K562 (cell line): ENCODE measurements at regions of chr2 and their contacts with region 1.

Region 1: DNA sequence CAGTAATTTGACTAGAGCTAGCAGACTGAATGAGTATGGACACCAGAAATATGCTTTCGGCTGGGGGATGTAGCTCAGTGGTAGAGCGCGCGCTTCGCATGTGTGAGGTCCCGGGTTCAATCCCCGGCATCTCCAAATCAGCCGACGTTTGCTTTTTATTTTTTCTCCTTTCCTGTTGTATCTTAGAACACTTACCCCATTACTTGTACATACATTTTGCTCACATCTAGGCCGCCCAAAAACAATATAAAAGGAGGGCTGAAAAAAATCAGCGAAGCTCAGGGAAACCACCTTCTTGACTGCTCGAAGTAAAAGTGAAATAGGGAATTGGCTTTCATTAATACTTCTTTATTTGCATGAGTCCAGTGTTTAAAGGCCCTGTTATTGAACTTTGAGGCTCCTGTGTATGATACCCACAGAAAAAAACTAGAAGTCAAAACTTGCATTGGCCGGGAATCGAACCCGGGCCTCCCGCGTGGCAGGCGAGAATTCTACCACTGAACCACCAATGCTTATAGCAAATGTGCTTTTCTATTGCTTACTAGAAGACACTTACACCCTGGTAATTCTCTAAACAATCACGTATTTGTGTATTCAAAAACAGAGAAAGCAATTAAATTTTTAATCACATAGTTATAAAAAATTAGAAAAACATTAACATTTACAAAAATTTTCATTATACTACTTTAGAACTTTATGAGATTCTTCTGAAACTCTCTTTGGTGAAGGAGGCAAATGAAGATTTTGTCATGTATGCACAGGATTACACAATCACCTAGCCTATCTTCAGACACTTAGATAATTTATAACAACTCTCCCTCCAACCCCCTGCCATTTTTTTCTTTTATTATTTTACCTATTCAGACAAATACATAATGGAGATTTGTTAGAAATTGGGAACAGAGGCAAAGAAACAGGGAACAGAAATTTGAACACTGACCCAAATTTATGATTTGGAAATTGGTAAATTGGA is 35.2 kb upstream of the GPD2 start:
- DNase-seq: peak; percentile 73 to 84 (median 74)
- ATAC-seq: peak; percentile 84
- H3K4me3 ChIP-seq: peak overlapping the region; percentile 63
- H3K27ac ChIP-seq: peak overlapping the region; percentile 77
- H3K4me1 ChIP-seq: peaks cover 8 to 18% of the 10 kb centered on the region in 2 experiments; a peak in 4 of 5 replicates
- H3K27me3 ChIP-seq: no peaks in the 10 kb centered on the region
- CTCF ChIP-seq: peak in 1 of 3 experiments; percentile 15; a peak in 1 of 6 replicates
- EP300 ChIP-seq: peak; percentile 60; the same call in 1 of the 2 replicates
- POLR2A ChIP-seq: no peak
- RAD21 ChIP-seq: peak; percentile 32 to 42

Region 2: DNA sequence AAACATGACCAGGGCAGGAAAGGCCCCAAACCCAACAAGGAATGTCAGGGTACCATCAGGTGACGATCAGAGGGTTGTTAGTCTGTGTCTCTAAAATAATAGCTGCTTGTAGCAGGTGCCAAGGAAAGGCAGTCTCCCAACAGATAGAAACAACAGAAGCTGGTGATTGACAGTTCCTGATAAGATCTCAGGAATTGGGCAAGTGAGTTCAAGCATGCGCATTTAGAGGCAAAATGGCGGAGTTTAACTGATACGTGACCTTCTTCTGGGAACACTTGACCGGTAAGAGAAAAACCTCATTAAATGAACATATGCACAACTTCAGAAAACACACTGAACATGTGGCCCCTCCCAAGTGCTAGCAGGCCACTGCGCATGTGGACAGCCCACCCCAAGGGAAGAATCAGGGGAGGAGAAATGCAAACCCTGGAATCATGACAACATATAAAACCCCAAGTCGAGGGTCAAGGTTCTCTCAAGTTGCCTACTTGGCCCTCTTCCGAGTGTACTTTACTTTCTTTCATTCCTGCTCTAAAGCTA is 1037.6 kb before region 1 on chr2:
- CTCF ChIA-PET with region 1: no interaction called
- POLR2A ChIA-PET with region 1: no interaction called
- in situ Hi-C with region 1: no loop called
- intact Hi-C with region 1: loop called (anchors 5 kb)
- DNase-seq: peak; percentile 21 to 83 (median 40)
- ATAC-seq: peak; percentile 59
- H3K4me3 ChIP-seq: peak overlapping the region; percentile 30
- H3K27ac ChIP-seq: peak overlapping the region; percentile 85
- H3K4me1 ChIP-seq: peaks cover 0 to 3% of the 10 kb centered on the region in 2 experiments; a peak in 1 of 5 replicates
- H3K27me3 ChIP-seq: no peaks in the 10 kb centered on the region
- CTCF ChIP-seq: no peak
- EP300 ChIP-seq: no peak
- POLR2A ChIP-seq: 0 out of 2 replicates have a peak, but pooled peaks have one; percentile 23
- RAD21 ChIP-seq: no peak

Region 3: DNA sequence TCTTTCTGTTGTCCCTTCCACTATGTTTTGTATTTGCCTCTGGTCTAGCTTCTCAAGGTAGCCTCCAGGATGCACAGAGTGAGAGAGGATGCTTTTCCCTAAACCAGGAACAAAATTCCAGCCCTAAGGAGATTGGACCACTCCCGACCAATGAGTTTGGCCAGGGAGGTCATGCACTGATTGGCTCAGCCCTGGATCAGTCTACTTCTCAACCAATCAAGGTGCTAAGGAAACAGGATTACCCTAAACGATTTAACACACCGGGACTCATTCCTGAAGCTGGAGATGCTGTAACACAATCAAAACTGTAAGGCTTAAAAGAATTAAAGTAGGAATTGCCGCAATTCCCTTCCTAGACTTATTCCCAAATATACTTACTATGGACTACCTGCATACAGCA is 34.2 kb before region 1 on chr2:
- CTCF ChIA-PET with region 1: no interaction called
- POLR2A ChIA-PET with region 1: no interaction called
- in situ Hi-C with region 1: no loop called
- intact Hi-C with region 1: no loop called
- DNase-seq: peak in 1 of 4 experiments; percentile 27
- ATAC-seq: peak; percentile 67
- H3K4me3 ChIP-seq: no peak overlapping the region
- H3K27ac ChIP-seq: no peak overlapping the region
- H3K4me1 ChIP-seq: no peaks in the 10 kb centered on the region
- H3K27me3 ChIP-seq: no peaks in the 10 kb centered on the region
- CTCF ChIP-seq: no peak
- EP300 ChIP-seq: no peak
- POLR2A ChIP-seq: no peak
- RAD21 ChIP-seq: no peak

Region 4: DNA sequence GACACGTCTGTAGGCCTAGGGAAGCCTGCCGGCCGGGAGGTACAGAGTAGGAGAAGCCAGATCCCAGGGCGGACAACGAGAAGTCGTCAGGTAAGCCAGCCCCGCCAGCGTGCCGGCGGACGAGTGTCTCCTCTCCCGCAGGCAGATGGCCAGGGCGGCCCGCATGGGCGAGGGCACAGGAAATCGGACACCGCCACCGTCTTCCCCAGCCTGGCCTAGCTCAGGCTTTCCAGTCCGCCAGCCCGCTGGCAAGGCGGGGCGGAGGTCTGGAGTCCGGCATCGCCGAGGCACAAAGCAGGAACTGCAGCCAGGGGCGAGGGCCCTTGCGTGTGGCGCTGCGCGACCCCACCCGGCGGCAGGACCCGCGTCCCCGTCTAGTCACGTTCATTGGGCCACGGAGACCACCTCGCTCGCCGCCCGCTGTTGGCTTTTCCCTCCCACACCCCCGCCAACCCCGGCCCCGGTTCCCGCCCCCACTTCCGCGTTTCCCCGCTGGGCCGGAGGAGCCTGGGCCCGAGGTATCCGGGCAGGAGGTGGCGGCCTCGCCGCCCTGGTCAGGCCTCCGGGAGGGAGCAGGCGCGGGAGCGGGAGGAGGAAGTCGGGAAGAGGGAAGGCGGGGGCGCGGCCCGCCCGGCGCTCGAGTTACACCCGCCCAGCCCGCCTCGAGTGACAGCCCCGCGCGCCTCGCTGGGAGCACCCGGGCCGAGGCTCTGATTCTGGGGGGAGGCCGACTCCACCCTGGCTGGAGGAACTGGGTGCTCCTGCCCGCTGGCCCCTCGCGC is 34.9 kb after region 1 on chr2 and contains the start of gene GPD2:
- CTCF ChIA-PET with region 1: no interaction called
- POLR2A ChIA-PET with region 1: interaction called, 4 read pairs
- in situ Hi-C with region 1: no loop called
- intact Hi-C with region 1: loop called (anchors 1 kb)
- DNase-seq: peak; percentile 78 to 81 (median 80)
- ATAC-seq: peak; percentile 89
- H3K4me3 ChIP-seq: peak within 1 kb of the TSS; percentile 49
- H3K27ac ChIP-seq: peak within 1 kb of the TSS; percentile 41
- H3K4me1 ChIP-seq: peaks cover 7 to 12% of the 10 kb centered on the region in 2 experiments
- H3K27me3 ChIP-seq: no peaks in the 10 kb centered on the region
- CTCF ChIP-seq: no peak
- EP300 ChIP-seq: no peak
- POLR2A ChIP-seq: peak; percentile 74
- RAD21 ChIP-seq: no peak
- polyA plus RNA-seq, gene GPD2: 5.2 to 6.0 TPM